ENCODE measurements at regions of chr11 and their contacts with region 1.

Region 1: GRCh38 chr11:93842461-93842860 is 8.0 kb downstream of the VSTM5 start:
- DNase-seq: peak; percentile 99
- ATAC-seq: peak; percentile 84
- H3K4me3 ChIP-seq: no peak overlapping the region
- H3K27ac ChIP-seq: peak overlapping the region; percentile 63
- H3K4me1 ChIP-seq: peaks cover 47% of the 10 kb centered on the region
- H3K27me3 ChIP-seq: no peaks in the 10 kb centered on the region
- CTCF ChIP-seq: no peak

Region 2: GRCh38 chr11:93796441-93797231 is 45.8 kb before region 1 on chr11:
- CTCF ChIA-PET with region 1: no interaction called
- POLR2A ChIA-PET with region 1: no interaction called
- intact Hi-C with region 1: loop called (anchors 5 kb)
- DNase-seq: no peak
- ATAC-seq: no peak
- H3K4me3 ChIP-seq: no peak overlapping the region
- H3K27ac ChIP-seq: no peak overlapping the region
- H3K4me1 ChIP-seq: no peaks in the 10 kb centered on the region
- H3K27me3 ChIP-seq: no peaks in the 10 kb centered on the region
- CTCF ChIP-seq: no peak

Region 3: GRCh38 chr11:93952082-93952780 is 109.8 kb after region 1 on chr11:
- CTCF ChIA-PET with region 1: no interaction called
- POLR2A ChIA-PET with region 1: no interaction called
- intact Hi-C with region 1: no loop called
- DNase-seq: no peak
- ATAC-seq: no peak
- H3K4me3 ChIP-seq: no peak overlapping the region
- H3K27ac ChIP-seq: no peak overlapping the region
- H3K4me1 ChIP-seq: peaks cover 20% of the 10 kb centered on the region
- H3K27me3 ChIP-seq: no peaks in the 10 kb centered on the region
- CTCF ChIP-seq: no peak